HepG2 (cell line): ENCODE measurements at regions of chr18 and their contacts with region 1.

Region 1: DNA sequence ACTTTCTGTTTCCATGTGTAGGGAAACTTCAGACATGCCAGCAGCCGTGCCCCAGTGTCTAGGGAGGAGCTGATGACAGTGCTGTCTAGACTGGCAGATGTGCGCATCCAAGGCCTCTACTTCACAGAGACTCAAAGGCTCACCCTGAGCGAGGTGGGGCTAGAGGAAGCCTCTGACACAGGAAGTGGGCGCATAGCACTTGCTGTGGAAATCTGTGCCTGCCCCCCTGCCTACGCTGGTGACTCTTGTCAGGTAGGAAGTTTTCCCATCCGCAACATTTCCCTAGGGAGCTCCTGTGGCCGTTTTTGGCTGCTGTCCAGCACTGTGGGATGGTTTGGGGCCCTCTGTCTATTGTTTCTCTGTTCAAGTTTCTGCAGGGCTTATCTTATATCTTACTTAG is 143.1 kb upstream of the TTC39C start:
- DNase-seq: no peak
- ATAC-seq: peak; percentile 60; the same call in 2 of the 3 replicates
- H3K4me3 ChIP-seq: no peak overlapping the region
- H3K27ac ChIP-seq: no peak overlapping the region
- H3K4me1 ChIP-seq: peaks cover 22% of the 10 kb centered on the region
- H3K27me3 ChIP-seq: no peaks in the 10 kb centered on the region; a peak in 1 of 5 replicates
- CTCF ChIP-seq: no peak
- EP300 ChIP-seq: no peak
- POLR2A ChIP-seq: no peak
- RAD21 ChIP-seq: no peak

Region 2: DNA sequence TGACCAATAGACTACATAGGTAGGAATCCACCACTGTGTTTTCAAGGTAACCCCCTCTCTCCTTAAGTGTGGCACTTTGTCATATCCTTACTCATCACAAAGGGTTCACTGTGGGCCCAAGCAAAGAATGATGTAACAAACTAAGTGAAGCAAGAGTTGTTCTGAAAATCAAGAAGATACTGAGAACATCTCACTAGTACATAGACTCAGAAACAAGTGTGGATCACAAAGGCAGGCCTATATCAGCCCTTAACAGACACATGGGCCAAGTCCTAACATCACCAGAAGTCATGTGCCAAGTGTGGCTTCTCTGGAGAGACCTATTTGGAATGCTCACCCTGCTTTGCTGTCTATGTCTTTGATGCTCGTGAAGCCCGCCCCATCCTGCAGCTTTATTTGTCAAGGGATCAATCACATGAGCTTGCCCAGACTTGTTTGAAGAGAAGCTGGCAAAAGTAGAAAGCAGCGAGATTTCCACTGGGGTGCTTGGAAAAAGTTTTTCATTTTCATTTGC is 11.9 kb after region 1 on chr18:
- CTCF ChIA-PET with region 1: no interaction called
- POLR2A ChIA-PET with region 1: interaction called, 10 read pairs
- in situ Hi-C with region 1: no loop called
- intact Hi-C with region 1: no loop called
- DNase-seq: peak; percentile 93
- ATAC-seq: peak; percentile 96
- H3K4me3 ChIP-seq: peak overlapping the region in 2 of 3 experiments; percentile 1 to 24; a peak in 1 of 6 replicates
- H3K27ac ChIP-seq: peak overlapping the region; percentile 65
- H3K4me1 ChIP-seq: peaks cover 35% of the 10 kb centered on the region
- H3K27me3 ChIP-seq: no peaks in the 10 kb centered on the region
- CTCF ChIP-seq: no peak
- EP300 ChIP-seq: peak; percentile 22 to 49; a peak in 1 of 4 replicates
- POLR2A ChIP-seq: no peak; a peak in 1 of 4 replicates
- RAD21 ChIP-seq: no peak